Dorsolateral prefrontal cortex (tissue), 120 donors: ENCODE measurements at regions of chr9 and their contacts with region 1.

Region 1: GRCh38 chr9:107637421-107638420 is 148.2 kb upstream of the KLF4 start:
- DNase-seq: peak; percentile 35 to 84 (median 72)
- H3K4me3 ChIP-seq: peak overlapping the region; percentile 30 to 81 (median 62)
- H3K27ac ChIP-seq: peak overlapping the region; percentile 51 to 97 (median 90)
- H3K27me3 ChIP-seq: no peaks in the 10 kb centered on the region
- CTCF ChIP-seq: peak in 28 of 56 donors; percentile 3 to 43 (median 20)

Region 2: DNA sequence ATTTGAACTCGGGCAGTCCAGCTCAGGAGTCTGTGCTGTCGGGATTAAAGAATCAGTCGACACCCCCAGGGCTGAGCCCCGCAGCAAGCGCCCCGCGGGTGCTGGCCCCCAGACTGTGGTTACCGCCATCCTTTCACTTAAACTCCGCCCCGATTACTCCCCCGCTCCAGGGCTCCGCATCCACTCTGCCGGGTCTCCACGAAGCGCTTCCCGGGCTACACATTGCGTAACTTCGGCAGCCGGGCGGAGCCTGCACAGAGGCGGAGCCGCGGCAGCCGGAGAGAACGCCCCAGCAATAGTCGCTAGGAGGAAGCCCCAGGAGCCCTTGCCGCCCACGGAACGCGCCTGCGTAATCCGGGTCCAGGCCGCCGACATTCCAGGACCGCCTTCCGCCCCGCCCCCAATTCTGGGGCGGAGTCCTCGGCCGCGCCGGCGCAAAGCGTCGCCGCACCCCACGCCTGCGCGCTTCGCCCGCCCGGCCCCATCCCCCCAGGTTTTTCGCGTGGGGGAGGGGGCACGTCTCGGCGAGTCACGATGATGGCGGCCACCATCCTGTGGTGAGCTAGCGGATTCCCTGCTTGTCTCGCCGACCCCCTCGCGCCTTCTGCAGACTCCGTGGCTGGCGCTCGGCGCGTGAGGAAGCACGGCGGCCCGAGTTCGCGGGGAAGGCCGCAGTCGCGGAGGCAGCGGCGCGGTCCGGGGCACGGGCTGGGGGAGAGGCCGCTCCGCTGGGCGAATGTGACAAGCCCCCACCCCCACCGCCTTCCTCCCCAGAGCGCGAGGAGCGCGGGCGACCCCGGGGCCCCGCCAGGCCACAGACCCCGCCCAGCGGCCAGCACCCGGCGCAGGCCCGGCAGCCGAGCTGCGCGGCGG is 354.7 kb before region 1 on chr9 and contains the start of gene RAD23B:
- intact Hi-C with region 1: loop called in 1 of 2 experiments (anchors 10 kb)
- DNase-seq: peak; percentile 94 to 99 (median 98)
- H3K4me3 ChIP-seq: peak within 1 kb of the TSS; percentile 69 to 99 (median 93)
- H3K27ac ChIP-seq: peak within 1 kb of the TSS; percentile 89 to 100 (median 98)
- H3K27me3 ChIP-seq: no peaks in the 10 kb centered on the region
- CTCF ChIP-seq: peak in 27 of 56 donors; percentile 2 to 49 (median 28)
- total RNA-seq, gene RAD23B: 67.9 to 114 (median 93.7) TPM

Region 3: DNA sequence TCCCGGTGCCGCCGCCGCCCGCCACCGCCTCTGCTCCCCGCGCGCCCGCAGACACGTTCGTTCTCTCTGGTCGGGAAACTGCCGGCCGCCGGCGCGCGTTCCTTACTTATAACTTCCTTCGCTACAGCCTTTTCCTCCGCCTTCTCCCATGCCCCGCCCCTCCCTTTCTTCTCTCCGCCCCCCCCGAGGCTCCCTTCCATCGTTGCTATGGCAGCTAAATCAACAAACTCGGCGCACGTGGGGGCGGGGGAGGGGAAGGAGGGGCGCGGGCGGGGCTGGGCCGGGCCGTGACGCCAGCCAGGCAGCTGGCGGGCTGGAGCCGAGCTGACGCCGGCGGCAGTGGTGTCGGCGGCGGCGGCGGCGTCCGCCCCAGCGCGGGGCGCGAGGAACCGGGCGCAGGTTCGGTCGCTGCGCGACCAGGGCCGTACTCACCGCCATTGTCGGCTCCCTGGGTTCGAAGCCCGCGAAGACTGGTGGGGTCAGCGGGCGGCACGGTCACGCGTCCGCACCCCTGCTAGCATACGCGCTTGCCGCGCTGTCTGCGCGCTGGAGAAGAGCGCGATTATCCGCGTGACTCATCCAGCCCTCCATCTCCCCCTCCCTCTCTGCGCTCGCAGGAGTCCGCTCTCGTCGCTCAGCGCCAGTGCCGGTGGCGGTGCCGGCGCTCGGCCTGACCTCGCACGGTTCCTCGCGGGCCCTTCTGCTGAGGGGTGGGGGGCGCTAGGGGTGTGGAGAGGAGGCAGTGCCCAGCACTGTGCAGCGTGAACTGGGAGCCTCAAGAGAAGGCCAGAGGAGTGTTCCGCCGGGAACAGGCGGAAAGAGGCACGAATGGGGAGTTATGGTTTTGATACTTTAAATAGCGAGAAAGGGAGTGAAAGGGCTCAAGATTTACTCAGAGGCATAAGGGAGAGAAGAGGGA is 147.8 kb before region 1 on chr9 and contains the start of gene KLF4:
- intact Hi-C with region 1: loop called (anchors 2 to 10 kb)
- DNase-seq: peak; percentile 33 to 88 (median 79)
- H3K4me3 ChIP-seq: peak within 1 kb of the TSS; percentile 44 to 89 (median 70)
- H3K27ac ChIP-seq: peak within 1 kb of the TSS in 50 of 59 donors; percentile 4 to 92 (median 72)
- H3K27me3 ChIP-seq: peaks cover 0 to 20% (median 0%) of the 10 kb centered on the region in 45 donors
- CTCF ChIP-seq: peak in 6 of 56 donors; percentile 7 to 37 (median 17)
- total RNA-seq, gene KLF4: 1.7 to 32.7 (median 8.3) TPM

Region 4: GRCh38 chr9:107732781-107733522 is 95.2 kb after region 1 on chr9:
- intact Hi-C with region 1: loop called in 1 of 2 experiments (anchors 5 kb)
- DNase-seq: peak in 1 of 10 donors; percentile 37
- H3K4me3 ChIP-seq: peak overlapping the region in 54 of 59 donors; percentile 4 to 63 (median 34)
- H3K27ac ChIP-seq: peak overlapping the region in 58 of 59 donors; percentile 7 to 92 (median 75)
- H3K27me3 ChIP-seq: no peaks in the 10 kb centered on the region
- CTCF ChIP-seq: no peak

Region 5: GRCh38 chr9:107749787-107750444 is 112.2 kb after region 1 on chr9:
- intact Hi-C with region 1: loop called (anchors 2 kb)
- DNase-seq: peak; percentile 18 to 92 (median 87)
- H3K4me3 ChIP-seq: peak overlapping the region in 1 of 59 donors; percentile 21
- H3K27ac ChIP-seq: peak overlapping the region; percentile 77 to 97 (median 90)
- H3K27me3 ChIP-seq: no peaks in the 10 kb centered on the region
- CTCF ChIP-seq: peak in 1 of 56 donors; percentile 11

Region 6: DNA sequence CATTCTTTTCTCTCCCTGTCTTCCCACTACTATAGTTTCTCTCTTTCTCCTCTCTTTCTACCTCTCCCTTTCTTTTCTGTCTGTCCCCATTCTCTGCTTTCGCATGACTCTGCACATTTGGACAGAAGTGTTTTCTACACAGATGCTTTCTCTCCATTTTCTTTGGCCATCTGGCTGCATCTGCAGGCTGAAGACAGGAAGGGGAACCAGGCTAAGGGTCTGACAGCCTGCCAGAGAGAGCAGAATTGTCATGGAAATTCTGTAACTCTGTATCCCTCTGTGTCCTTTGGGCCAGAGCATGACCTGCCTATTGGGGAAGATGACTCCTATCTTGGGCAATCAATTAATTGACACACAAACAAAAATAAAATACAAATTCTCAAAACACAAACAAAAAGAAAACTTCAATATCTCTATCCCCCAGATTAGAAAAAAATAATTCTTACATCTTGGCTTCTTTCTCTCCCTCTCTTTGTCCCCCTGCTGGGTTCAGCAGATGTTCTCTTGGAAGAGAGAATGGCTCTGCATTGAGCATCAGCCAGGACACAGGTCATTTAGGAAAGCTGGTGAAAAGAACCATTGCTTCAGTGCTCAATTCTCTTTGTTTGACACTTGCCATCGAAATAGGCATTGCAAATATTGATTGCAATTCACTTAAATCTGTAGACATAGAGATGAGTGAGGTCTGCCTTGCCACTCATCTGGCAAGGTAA is 267.7 kb after region 1 on chr9:
- intact Hi-C with region 1: loop called in 1 of 2 experiments (anchors 10 kb)
- DNase-seq: no peak
- H3K4me3 ChIP-seq: no peak overlapping the region
- H3K27ac ChIP-seq: peak overlapping the region in 46 of 59 donors; percentile 2 to 94 (median 83)
- H3K27me3 ChIP-seq: no peaks in the 10 kb centered on the region
- CTCF ChIP-seq: no peak

Region 7: DNA sequence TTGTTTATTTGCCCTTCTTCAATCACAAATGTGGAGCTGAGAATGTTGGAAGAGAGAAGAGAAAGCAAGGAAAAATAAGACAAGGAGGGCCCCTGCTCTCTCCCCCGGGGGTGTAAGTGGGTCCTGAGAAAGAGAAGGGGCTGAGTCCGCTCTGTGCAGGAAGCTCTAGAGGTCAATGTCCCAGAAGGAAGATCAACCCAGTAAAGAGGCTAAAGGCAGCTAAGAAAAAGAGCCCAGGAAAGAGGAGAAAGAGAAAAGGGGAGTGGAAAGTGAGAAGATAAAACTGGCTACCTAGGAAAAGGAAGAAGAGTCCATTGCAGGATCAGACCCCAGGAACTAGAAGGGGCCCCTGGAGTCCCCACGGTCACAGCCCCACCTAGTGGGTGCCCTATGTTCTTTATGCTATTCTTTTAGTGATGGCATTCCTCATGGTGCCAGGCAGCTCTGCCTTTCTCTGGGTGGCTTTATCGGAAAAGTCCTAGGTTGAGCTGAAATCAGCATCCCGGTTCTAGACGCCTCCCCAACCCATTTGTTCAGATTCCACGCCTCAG is 634.7 kb after region 1 on chr9:
- intact Hi-C with region 1: loop called in 1 of 2 experiments (anchors 10 kb)
- DNase-seq: peak in 9 of 10 donors; percentile 4 to 59 (median 42)
- H3K4me3 ChIP-seq: peak overlapping the region in 32 of 59 donors; percentile 1 to 43 (median 22)
- H3K27ac ChIP-seq: peak overlapping the region in 9 of 59 donors; percentile 6 to 49 (median 25)
- H3K27me3 ChIP-seq: no peaks in the 10 kb centered on the region
- CTCF ChIP-seq: peak; percentile 35 to 83 (median 66)